Heart right ventricle (tissue), 16 donors: ENCODE measurements at regions of chr20 and their contacts with region 1.

Region 1: DNA sequence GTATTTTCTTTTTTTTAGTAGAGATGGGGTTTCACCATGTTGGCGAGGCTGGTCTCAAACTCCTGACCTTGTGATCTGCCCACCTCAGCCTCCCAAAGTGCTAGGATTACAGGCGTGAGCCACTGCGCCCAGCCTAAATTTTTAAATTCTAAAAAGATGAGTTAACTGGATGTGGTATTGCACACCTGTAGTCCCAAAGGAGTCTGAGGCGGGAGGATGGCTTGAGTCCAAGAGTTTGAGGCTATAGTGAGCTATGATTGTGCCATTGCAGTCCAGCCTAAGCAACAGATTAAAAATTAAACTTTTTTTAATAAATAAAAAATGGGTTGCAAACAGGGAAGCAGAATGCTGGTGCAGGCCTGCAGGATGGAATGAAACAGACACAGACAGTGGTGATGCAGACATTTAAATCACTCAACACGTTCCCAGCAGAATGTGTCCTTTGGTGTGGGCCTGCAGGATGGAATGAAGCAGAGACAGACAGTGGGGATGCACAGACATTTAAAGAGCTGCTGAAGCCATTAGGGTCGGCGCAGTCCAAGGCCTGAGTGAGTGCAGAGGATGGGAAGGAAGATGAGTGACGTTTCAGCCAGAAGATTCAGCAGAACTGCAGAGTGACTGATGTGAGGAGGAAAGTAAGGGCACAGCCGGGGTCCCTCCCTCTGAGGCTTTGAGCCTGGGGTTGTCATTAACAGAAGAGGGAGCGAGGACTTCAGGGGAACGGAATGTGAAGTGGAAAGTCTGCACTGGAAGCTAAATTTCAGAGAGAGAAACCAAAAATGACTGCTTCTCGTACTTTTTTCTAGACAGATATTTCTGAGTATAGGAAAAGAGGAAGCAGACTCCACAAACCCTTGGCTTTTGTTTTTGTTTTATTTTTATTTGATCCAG is 117.5 kb downstream of the RIN2 start:
- DNase-seq: no peak
- ATAC-seq: peak in 7 of 8 donors; percentile 54 to 81 (median 69)
- H3K4me3 ChIP-seq: peak overlapping the region in 3 of 10 donors; percentile 12 to 17 (median 14)
- H3K27ac ChIP-seq: peak overlapping the region in 9 of 10 donors; percentile 3 to 84 (median 53)
- H3K4me1 ChIP-seq: peaks cover 0 to 31% (median 20%) of the 10 kb centered on the region in 9 donors
- H3K27me3 ChIP-seq: no peaks in the 10 kb centered on the region
- CTCF ChIP-seq: no peak

Region 2: GRCh38 chr20:19840111-19840710 is 35.4 kb before region 1 on chr20:
- intact Hi-C with region 1: loop called in 1 of 10 experiments (anchors 5 kb)
- DNase-seq: no peak
- ATAC-seq: no peak
- H3K4me3 ChIP-seq: no peak overlapping the region
- H3K27ac ChIP-seq: no peak overlapping the region
- H3K4me1 ChIP-seq: peaks cover 0 to 23% (median 11%) of the 10 kb centered on the region in 9 donors
- H3K27me3 ChIP-seq: no peaks in the 10 kb centered on the region
- CTCF ChIP-seq: no peak

Region 3: GRCh38 chr20:20083807-20084206 is 208.2 kb after region 1 on chr20:
- intact Hi-C with region 1: no loop called
- DNase-seq: no peak
- ATAC-seq: peak in 6 of 8 donors; percentile 11 to 46 (median 32)
- H3K4me3 ChIP-seq: peak overlapping the region in 2 of 10 donors; percentile 2 to 16
- H3K27ac ChIP-seq: peak overlapping the region in 9 of 10 donors; percentile 64 to 87 (median 84)
- H3K4me1 ChIP-seq: peaks cover 0 to 28% (median 4%) of the 10 kb centered on the region in 9 donors
- H3K27me3 ChIP-seq: peaks cover 0 to 17% (median 5%) of the 10 kb centered on the region in 7 donors
- CTCF ChIP-seq: peak; percentile 18 to 68 (median 55)

Region 4: GRCh38 chr20:20184149-20184548 is 308.6 kb after region 1 on chr20:
- intact Hi-C with region 1: no loop called
- DNase-seq: no peak
- ATAC-seq: no peak
- H3K4me3 ChIP-seq: no peak overlapping the region
- H3K27ac ChIP-seq: no peak overlapping the region
- H3K4me1 ChIP-seq: no peaks in the 10 kb centered on the region
- H3K27me3 ChIP-seq: no peaks in the 10 kb centered on the region
- CTCF ChIP-seq: peak in 3 of 9 donors; percentile 7 to 50 (median 26)